Naive thymus-derived CD4-positive, alpha-beta T cell (primary cell): ENCODE measurements at regions of chr15 and their contacts with region 1.

Region 1: DNA sequence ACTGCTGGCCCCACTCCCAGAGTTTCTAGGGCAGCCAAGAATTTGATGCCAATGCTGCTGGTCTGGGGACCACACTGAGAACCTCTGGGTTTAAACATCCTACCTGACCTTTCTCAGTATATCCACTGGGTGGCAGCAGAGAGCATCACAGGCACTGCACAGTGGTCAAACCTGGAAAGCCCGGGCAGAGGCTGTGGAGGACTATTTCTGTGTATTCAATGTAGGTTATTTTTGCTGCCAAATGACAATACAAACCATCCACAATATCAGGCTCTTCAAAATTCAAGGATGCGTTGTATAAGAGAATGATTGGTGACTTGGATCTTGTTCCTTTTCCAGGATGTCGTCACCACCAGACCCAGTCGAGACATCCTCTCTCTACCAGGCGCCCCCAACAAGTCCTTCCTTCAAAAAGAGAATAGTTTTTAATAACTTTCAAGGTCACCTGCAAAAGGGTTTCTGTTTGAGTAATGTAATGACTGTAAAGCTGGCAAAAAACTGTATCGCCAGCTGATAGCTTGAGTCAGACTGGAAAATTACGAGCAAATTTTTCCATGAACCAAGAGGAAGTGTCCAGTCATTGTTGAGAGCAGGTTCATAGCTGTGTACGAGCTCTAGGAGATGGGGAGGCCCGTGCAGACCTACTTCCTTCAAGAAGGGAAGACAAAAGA is 30.5 kb upstream of the MYZAP start:
- DNase-seq: peak; percentile 33 to 76 (median 62)
- ATAC-seq: peak; percentile 86
- H3K4me3 ChIP-seq: no peak overlapping the region
- H3K4me3 Mint-ChIP-seq: peak overlapping the region in 9 of 10 donors; percentile 9 to 56 (median 28)
- H3K27ac ChIP-seq: no peak overlapping the region
- H3K27ac Mint-ChIP-seq: peak overlapping the region in 6 of 9 donors; percentile 10 to 76 (median 53)
- H3K4me1 ChIP-seq: peaks cover 4 to 15% of the 10 kb centered on the region in 2 donors
- H3K4me1 Mint-ChIP-seq: peaks cover 11 to 47% (median 37%) of the 10 kb centered on the region in 7 donors
- H3K27me3 ChIP-seq: no peaks in the 10 kb centered on the region
- H3K27me3 Mint-ChIP-seq: peaks cover 0 to 6% (median 0%) of the 10 kb centered on the region in 5 donors

Region 2: GRCh38 chr15:57510647-57511046 is 50.5 kb before region 1 on chr15:
- CTCF ChIA-PET with region 1: no interaction called
- POLR2A ChIA-PET with region 1: no interaction called
- intact Hi-C with region 1: no loop called
- DNase-seq: no peak
- ATAC-seq: no peak
- H3K4me3 ChIP-seq: no peak overlapping the region
- H3K4me3 Mint-ChIP-seq: no peak overlapping the region
- H3K27ac ChIP-seq: no peak overlapping the region
- H3K27ac Mint-ChIP-seq: no peak overlapping the region
- H3K4me1 ChIP-seq: no peaks in the 10 kb centered on the region
- H3K4me1 Mint-ChIP-seq: no peaks in the 10 kb centered on the region
- H3K27me3 ChIP-seq: no peaks in the 10 kb centered on the region
- H3K27me3 Mint-ChIP-seq: peaks cover 0 to 10% (median 0%) of the 10 kb centered on the region in 5 donors

Region 3: GRCh38 chr15:57591646-57592367 is 30.6 kb after region 1 on chr15 and contains the start of gene MYZAP:
- CTCF ChIA-PET with region 1: interaction called, 11 read pairs
- POLR2A ChIA-PET with region 1: interaction called, 8 read pairs
- intact Hi-C with region 1: loop called in 1 of 2 experiments (anchors 1 kb)
- DNase-seq: peak; percentile 19 to 65 (median 51)
- ATAC-seq: peak; percentile 87
- H3K4me3 ChIP-seq: peak within 1 kb of the TSS; percentile 50
- H3K4me3 Mint-ChIP-seq: peak within 1 kb of the TSS; percentile 60 to 86 (median 82)
- H3K27ac ChIP-seq: peak within 1 kb of the TSS; percentile 15
- H3K27ac Mint-ChIP-seq: peak within 1 kb of the TSS in 8 of 9 donors; percentile 25 to 92 (median 79)
- H3K4me1 ChIP-seq: peaks cover 0 to 36% of the 10 kb centered on the region in 2 donors
- H3K4me1 Mint-ChIP-seq: peaks cover 18 to 70% (median 56%) of the 10 kb centered on the region in 7 donors
- H3K27me3 ChIP-seq: no peaks in the 10 kb centered on the region
- H3K27me3 Mint-ChIP-seq: peaks cover 0 to 47% (median 19%) of the 10 kb centered on the region in 5 donors
- total RNA-seq, gene MYZAP: 1.1 to 2.2 (median 1.7) TPM in 4 of 5 experiments, not detected in the other

Region 4: GRCh38 chr15:57640935-57641682 is 79.9 kb after region 1 on chr15:
- CTCF ChIA-PET with region 1: interaction called, 8 read pairs
- POLR2A ChIA-PET with region 1: no interaction called
- intact Hi-C with region 1: loop called (anchors 1 to 5 kb)
- DNase-seq: peak in 7 of 9 donors; percentile 10 to 36 (median 16)
- ATAC-seq: peak; percentile 32
- H3K4me3 ChIP-seq: no peak overlapping the region
- H3K4me3 Mint-ChIP-seq: no peak overlapping the region
- H3K27ac ChIP-seq: no peak overlapping the region
- H3K27ac Mint-ChIP-seq: peak overlapping the region in 1 of 9 donors; percentile 23
- H3K4me1 ChIP-seq: no peaks in the 10 kb centered on the region
- H3K4me1 Mint-ChIP-seq: peaks cover 0 to 11% (median 4%) of the 10 kb centered on the region in 7 donors
- H3K27me3 ChIP-seq: no peaks in the 10 kb centered on the region
- H3K27me3 Mint-ChIP-seq: peaks cover 0 to 7% (median 0%) of the 10 kb centered on the region in 5 donors

Region 5: GRCh38 chr15:57706405-57707209 is 145.4 kb after region 1 on chr15 and contains the start of gene POLR2M:
- CTCF ChIA-PET with region 1: interaction called, 10 read pairs
- POLR2A ChIA-PET with region 1: interaction called, 3 read pairs
- intact Hi-C with region 1: loop called (anchors 1 to 5 kb)
- DNase-seq: peak; percentile 67 to 97 (median 91)
- ATAC-seq: peak; percentile 94
- H3K4me3 ChIP-seq: peak within 1 kb of the TSS; percentile 88
- H3K4me3 Mint-ChIP-seq: peak within 1 kb of the TSS; percentile 83 to 93 (median 89)
- H3K27ac ChIP-seq: peak within 1 kb of the TSS; percentile 92
- H3K27ac Mint-ChIP-seq: peak within 1 kb of the TSS; percentile 63 to 99 (median 97)
- H3K4me1 ChIP-seq: peaks cover 17 to 38% of the 10 kb centered on the region in 2 donors
- H3K4me1 Mint-ChIP-seq: peaks cover 51 to 96% (median 94%) of the 10 kb centered on the region in 7 donors
- H3K27me3 ChIP-seq: no peaks in the 10 kb centered on the region
- H3K27me3 Mint-ChIP-seq: peaks cover 0 to 3% (median 0%) of the 10 kb centered on the region in 5 donors
- total RNA-seq, gene POLR2M: 67.0 to 105 (median 82.9) TPM

Region 6: DNA sequence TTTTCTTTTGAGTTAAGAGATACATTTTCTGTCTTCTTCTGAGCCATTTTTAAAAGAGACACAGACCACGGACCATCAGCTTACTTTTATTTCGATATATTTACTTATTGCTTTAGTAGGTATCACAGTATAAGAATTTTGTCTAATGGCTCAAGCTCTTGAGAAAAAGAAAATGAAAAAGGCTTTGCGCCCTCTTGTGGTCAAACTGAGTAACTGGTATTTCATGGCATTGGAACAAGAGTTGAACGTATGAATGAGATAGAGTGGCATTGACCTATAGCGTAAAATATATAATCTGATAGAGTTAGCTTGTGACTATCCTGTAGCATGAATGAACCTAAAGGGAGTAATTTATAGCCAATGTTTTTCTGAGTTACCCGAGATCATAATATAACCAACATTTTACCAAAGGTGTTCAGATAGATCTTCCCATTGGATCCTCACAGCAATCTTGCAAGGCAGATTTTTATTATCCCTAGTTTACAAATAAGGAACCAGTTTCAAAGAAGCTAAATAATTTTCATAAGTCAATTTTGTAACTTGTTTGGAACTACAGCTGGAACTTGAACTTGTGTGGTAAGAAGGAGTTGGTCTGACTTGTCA is 300.0 kb after region 1 on chr15:
- CTCF ChIA-PET with region 1: interaction called, 27 read pairs
- POLR2A ChIA-PET with region 1: no interaction called
- intact Hi-C with region 1: loop called (anchors 1 kb)
- DNase-seq: peak in 7 of 9 donors; percentile 16 to 67 (median 53)
- ATAC-seq: peak; percentile 47
- H3K4me3 ChIP-seq: no peak overlapping the region
- H3K4me3 Mint-ChIP-seq: no peak overlapping the region
- H3K27ac ChIP-seq: no peak overlapping the region
- H3K27ac Mint-ChIP-seq: no peak overlapping the region
- H3K4me1 ChIP-seq: no peaks in the 10 kb centered on the region
- H3K4me1 Mint-ChIP-seq: peaks cover 0 to 9% (median 0%) of the 10 kb centered on the region in 7 donors
- H3K27me3 ChIP-seq: no peaks in the 10 kb centered on the region
- H3K27me3 Mint-ChIP-seq: peaks cover 8 to 68% (median 12%) of the 10 kb centered on the region in 5 donors

Region 7: DNA sequence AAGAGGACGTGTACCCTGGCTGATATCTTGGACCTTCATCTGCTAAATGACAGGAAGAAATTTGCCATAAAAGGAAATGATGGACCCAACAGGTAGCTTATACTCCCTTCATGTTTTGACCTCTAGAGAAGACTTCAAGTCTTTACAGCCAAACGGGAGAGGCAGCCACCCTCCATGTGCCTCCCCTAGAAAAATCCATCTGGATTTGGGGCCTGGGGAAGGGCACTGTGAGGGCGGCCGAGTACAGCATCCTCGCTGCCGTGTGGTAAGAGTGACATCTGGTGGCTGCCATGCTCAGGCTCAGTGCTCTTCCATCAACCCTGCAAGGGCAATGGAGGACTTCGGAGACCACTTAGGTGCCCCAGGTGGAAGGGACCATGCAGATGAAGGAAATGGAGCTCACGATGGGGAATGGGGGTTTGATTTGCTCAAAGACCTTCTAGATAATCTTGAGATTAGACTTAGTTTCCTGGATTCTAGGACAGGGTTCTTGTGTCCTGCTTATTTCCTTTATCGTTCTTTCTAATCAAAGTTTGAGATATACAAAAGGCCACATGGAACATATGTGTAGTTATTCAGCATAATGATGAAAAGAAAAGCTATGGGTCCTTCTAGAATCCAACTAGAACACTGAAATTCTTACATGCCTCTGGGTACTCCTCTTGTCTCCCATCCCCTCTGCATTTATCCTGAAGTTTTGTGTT is 621.4 kb after region 1 on chr15:
- CTCF ChIA-PET with region 1: no interaction called
- POLR2A ChIA-PET with region 1: no interaction called
- intact Hi-C with region 1: loop called (anchors 5 to 10 kb)
- DNase-seq: peak in 3 of 9 donors; percentile 4 to 39 (median 9)
- ATAC-seq: peak; percentile 66
- H3K4me3 ChIP-seq: no peak overlapping the region
- H3K4me3 Mint-ChIP-seq: no peak overlapping the region
- H3K27ac ChIP-seq: no peak overlapping the region
- H3K27ac Mint-ChIP-seq: no peak overlapping the region
- H3K4me1 ChIP-seq: peaks cover 0 to 4% of the 10 kb centered on the region in 2 donors
- H3K4me1 Mint-ChIP-seq: peaks cover 0 to 12% (median 10%) of the 10 kb centered on the region in 7 donors
- H3K27me3 ChIP-seq: no peaks in the 10 kb centered on the region
- H3K27me3 Mint-ChIP-seq: peaks cover 10 to 37% (median 24%) of the 10 kb centered on the region in 5 donors